ENCODE measurements at regions of chr12 and their contacts with region 1.

Region 1: GRCh38 chr12:29700761-29701481 is 82.8 kb downstream of the TMTC1 start:
- DNase-seq: no peak
- H3K4me3 ChIP-seq: no peak overlapping the region
- CTCF ChIP-seq: no peak

Region 2: GRCh38 chr12:29662734-29663323 is 38.1 kb before region 1 on chr12:
- in situ Hi-C with region 1: no loop called
- DNase-seq: peak; percentile 6
- H3K4me3 ChIP-seq: no peak overlapping the region
- CTCF ChIP-seq: no peak

Region 3: GRCh38 chr12:29771786-29772185 is 70.9 kb after region 1 on chr12:
- in situ Hi-C with region 1: loop called (anchors 5 kb)
- DNase-seq: no peak
- H3K4me3 ChIP-seq: no peak overlapping the region
- CTCF ChIP-seq: no peak

Measured in astrocyte of the cerebellum (primary cell).